ENCODE measurements at regions of chr3 and their contacts with region 1.

Region 1: GRCh38 chr3:38992117-38992760 is 59.5 kb downstream of the SCN11A start:
- DNase-seq: no peak
- H3K4me3 ChIP-seq: no peak overlapping the region
- H3K27ac ChIP-seq: no peak overlapping the region
- H3K4me1 ChIP-seq: no peaks in the 10 kb centered on the region
- H3K27me3 ChIP-seq: no peaks in the 10 kb centered on the region
- CTCF ChIP-seq: no peak
- EP300 ChIP-seq: no peak
- POLR2A ChIP-seq: no peak

Region 2: DNA sequence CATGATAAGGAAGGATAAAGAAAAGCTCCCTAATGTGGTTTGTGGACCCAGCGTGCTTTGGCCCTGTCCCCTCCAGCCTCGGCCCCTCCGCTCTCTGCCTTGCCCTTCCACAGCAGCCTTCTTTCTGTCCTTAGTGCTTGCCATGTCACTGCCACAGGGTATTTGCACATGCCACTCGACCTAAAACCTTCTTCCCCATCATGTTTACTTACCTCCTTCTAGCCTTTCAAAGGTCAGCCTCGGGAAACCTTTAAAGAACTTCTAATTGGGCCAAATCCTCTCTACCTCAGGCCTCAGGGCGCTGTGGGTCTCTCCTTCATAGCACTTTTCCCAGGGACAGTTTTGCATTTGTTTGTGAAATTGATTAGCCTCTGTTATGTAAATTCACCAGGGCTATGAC is 13.5 kb before region 1 on chr3:
- intact Hi-C with region 1: loop called in 1 of 4 experiments (anchors 1 kb)
- DNase-seq: no peak
- H3K4me3 ChIP-seq: no peak overlapping the region
- H3K27ac ChIP-seq: no peak overlapping the region
- H3K4me1 ChIP-seq: no peaks in the 10 kb centered on the region
- H3K27me3 ChIP-seq: no peaks in the 10 kb centered on the region
- CTCF ChIP-seq: no peak
- EP300 ChIP-seq: no peak
- POLR2A ChIP-seq: no peak

Measured in ovary (tissue), 10 donors.